Left lung (tissue), 14 donors: ENCODE measurements at regions of chr5 and their contacts with region 1.

Region 1: DNA sequence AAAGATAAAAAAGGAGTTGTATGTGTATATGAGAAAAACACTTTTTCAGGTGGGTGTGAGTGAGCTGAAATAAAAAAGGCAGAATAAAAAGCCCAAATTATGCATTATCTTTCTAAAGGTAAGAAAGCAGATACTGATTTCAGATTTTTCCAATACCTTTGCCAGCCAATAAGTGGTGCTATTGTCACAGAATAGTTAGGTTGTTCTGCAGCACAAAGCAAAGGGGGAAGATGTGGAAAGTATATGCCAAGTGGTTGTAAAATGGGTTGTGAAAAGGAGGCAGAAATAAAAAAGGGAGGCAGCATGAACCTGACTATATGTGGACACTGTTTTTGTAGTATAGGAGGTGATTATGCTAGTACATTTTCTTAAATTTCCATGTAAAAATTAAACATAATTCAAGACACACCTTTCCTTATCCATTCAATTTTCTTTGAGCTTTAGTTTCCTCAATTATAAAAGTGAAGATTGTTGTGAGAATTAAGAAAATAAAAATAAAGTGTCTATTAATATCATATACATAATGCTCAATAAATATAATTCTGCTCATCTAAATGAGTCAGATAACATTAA is 106.7 kb downstream of the SMIM15 start:
- DNase-seq: peak in 2 of 4 donors; percentile 27 to 44
- ATAC-seq: peak; percentile 78
- H3K4me3 ChIP-seq: no peak overlapping the region
- H3K27ac ChIP-seq: no peak overlapping the region
- H3K4me1 ChIP-seq: peaks cover 0 to 5% of the 10 kb centered on the region in 2 donors
- H3K27me3 ChIP-seq: no peaks in the 10 kb centered on the region
- CTCF ChIP-seq: peak; percentile 52 to 54

Region 2: DNA sequence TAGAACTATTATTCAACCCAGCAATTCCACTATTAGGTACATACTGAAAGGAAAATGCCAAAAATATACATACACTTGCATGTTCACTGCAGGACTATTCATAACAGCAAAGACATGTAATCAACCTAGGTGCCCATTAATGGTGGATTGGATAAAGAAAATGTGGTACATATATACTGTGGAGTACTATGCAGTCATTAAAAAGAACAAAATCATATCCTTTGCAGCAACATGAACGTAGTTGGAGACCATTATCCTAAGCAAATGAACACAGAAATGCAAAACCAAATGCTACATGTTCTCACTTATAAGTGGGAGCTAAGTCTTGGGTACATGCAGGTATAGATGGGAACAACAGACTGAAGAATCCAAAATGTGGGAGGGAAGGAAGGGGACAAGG is 279.2 kb before region 1 on chr5:
- intact Hi-C with region 1: no loop called
- DNase-seq: no peak
- ATAC-seq: no peak
- H3K4me3 ChIP-seq: no peak overlapping the region
- H3K27ac ChIP-seq: no peak overlapping the region
- H3K4me1 ChIP-seq: no peaks in the 10 kb centered on the region
- H3K27me3 ChIP-seq: no peaks in the 10 kb centered on the region
- CTCF ChIP-seq: no peak

Region 3: GRCh38 chr5:61658592-61659008 is 603.1 kb after region 1 on chr5:
- intact Hi-C with region 1: loop called in 1 of 2 experiments (anchors 10 kb)
- DNase-seq: peak; percentile 52 to 93 (median 80)
- ATAC-seq: peak; percentile 97
- H3K4me3 ChIP-seq: no peak overlapping the region
- H3K27ac ChIP-seq: no peak overlapping the region
- H3K4me1 ChIP-seq: no peaks in the 10 kb centered on the region
- H3K27me3 ChIP-seq: no peaks in the 10 kb centered on the region
- CTCF ChIP-seq: peak; percentile 90 to 96

Region 4: DNA sequence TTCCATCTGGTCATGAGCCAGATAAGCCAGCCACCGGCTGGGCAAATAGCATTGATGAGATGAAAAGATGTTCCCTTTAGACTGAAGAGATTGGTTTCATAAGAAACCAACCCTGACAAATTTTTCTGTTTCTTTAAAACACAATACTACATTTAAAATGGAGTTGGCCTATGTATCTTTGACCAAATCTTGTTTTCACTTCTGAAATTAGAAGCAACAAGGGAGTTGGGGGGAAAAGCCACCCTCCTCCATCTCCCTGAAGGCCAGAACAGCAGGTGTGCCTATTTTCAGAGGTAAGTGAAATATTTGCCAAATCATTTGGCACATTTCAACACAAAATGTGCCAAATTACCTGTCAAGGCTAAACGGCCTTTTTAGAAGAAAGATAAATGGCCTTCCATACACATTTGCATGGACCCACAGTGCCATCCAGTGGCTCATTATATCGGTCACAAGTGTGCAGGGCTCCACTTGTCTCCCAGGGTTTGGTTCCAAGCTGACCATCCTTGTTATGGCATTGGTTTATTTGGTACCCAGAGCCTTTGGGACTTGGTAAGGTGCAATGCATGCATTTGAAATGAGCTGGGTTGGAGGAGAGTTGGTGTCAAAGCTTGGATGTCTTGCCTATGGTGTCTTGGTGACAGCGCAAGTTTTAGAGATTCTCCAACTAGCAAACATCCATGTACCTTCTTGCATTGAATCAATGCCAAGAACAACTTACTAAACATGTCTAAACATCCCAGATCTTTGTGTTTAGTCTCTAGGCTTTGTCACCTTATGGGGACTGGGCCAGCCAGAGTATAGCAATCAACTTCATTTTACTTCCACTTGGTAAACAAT is 878.5 kb after region 1 on chr5:
- intact Hi-C with region 1: loop called in 1 of 2 experiments (anchors 10 kb)
- DNase-seq: peak in 2 of 4 donors; percentile 53 to 75
- ATAC-seq: peak; percentile 92
- H3K4me3 ChIP-seq: no peak overlapping the region
- H3K27ac ChIP-seq: no peak overlapping the region
- H3K4me1 ChIP-seq: no peaks in the 10 kb centered on the region
- H3K27me3 ChIP-seq: no peaks in the 10 kb centered on the region
- CTCF ChIP-seq: peak; percentile 50 to 58